Dorsolateral prefrontal cortex (tissue), 120 donors: ENCODE measurements at regions of chr20 and their contacts with region 1.

Region 1: DNA sequence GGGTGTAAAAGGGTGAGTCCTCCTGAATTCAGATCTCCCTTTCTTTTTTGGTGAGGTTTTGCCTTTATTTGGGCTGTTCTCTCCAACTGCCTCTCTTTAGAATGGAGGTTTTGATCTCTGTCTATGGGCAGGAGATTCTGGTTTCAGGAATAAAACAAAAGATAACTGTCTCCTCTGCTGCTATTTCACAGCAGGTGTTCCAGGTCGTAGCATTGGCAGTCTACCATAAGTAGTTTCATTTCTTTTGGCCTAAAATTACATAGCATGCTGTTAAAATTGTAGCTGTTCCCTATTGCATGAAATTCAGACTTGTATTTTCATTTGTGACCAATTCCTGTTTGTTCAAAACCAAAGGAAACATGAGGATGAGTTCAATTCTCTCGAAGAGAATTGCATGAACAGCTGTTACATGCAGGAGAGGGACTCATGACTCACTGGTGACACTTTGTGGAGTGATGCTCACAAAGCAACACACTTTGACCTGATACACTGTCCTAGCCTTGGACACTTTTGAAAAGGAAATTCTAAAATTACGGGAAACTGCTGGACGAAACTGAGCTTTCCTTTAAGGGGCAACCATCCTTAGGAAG is 76.8 kb upstream of the SIRPG start:
- DNase-seq: peak in 1 of 10 donors; percentile 33
- H3K4me3 ChIP-seq: peak overlapping the region in 1 of 59 donors; percentile 9
- H3K27ac ChIP-seq: peak overlapping the region in 18 of 59 donors; percentile 6 to 59 (median 36)
- H3K27me3 ChIP-seq: no peaks in the 10 kb centered on the region
- CTCF ChIP-seq: peak in 51 of 56 donors; percentile 24 to 69 (median 50)

Region 2: DNA sequence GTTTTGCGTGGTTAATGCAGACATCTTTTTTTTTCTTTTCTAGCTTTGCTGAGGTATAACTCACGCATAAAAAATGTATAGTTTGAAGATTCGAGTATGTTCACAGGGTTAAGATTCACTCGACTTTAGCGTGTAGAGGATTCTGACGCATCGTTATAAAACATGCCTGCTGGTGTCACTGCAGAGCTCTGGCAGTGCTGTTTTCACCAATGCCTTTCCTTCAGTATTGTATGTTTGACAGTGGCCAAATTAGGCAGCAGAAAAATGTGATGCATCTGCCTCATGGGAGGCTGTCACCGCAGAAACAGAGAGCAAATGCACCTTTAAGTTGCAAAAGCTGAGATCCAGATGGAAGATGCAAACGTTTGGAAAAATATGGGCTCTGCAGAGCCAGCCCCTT is 225.1 kb before region 1 on chr20:
- intact Hi-C with region 1: loop called in 1 of 2 experiments (anchors 2 kb)
- DNase-seq: peak in 8 of 10 donors; percentile 4 to 64 (median 50)
- H3K4me3 ChIP-seq: no peak overlapping the region
- H3K27ac ChIP-seq: peak overlapping the region in 7 of 59 donors; percentile 12 to 44 (median 36)
- H3K27me3 ChIP-seq: no peaks in the 10 kb centered on the region
- CTCF ChIP-seq: peak in 54 of 56 donors; percentile 30 to 73 (median 58)

Region 3: GRCh38 chr20:1702328-1702727 is 32.0 kb before region 1 on chr20:
- intact Hi-C with region 1: loop called in 1 of 2 experiments (anchors 2 kb)
- DNase-seq: no peak
- H3K4me3 ChIP-seq: no peak overlapping the region
- H3K27ac ChIP-seq: no peak overlapping the region
- H3K27me3 ChIP-seq: no peaks in the 10 kb centered on the region
- CTCF ChIP-seq: no peak